HEK293 (cell line): ENCODE measurements at regions of chr19 and their contacts with region 1.

Region 1: DNA sequence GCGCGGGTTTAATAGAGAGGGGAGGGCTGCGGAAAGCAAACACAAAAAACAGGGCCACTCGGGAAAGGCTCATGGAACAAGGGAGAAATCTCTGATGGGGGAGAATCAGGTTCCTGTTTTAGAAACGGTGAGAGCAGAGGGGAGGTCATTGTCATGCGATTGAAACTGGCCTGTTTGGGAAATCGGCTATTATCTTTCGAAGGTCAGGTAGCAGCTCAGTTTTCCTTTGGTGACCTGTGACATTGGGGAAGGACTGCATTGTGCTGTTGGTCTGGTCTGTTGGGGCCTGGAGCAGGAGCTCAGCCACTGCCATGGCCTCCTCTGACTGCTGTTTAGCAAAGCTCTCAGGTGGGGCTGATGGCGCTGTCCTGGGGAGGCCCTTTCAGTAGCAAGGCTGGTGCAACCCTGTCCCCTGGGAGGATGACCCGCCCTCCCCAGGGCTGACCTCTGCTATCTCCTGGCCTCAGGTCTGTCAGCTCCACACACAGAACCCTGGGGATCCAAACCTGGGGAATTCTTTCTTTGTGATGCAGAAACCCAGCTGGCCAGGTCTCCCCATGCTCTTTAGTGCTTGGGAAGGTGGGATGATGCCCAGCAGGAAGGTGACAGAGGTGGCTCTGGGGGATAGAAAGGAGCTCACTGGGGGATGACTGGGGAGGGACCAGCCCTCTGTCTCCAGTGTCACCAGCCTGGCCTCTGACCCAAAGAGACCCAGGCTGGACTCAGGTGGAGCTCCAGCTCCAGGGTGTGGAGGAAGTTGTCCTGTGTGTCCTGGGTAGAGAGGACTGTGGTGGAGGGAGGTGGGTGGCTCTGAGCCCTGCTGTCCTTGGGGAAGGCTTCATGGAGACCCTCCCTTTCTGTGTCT is 21.2 kb upstream of the CD177 start:
- H3K4me3 ChIP-seq: no peak overlapping the region
- H3K27ac ChIP-seq: no peak overlapping the region
- H3K4me1 ChIP-seq: no peaks in the 10 kb centered on the region
- CTCF ChIP-seq: no peak

Region 2: GRCh38 chr19:43316592-43317319 is 15.5 kb before region 1 on chr19:
- CTCF ChIA-PET with region 1: interaction called, 68 read pairs
- POLR2A ChIA-PET with region 1: no interaction called
- H3K4me3 ChIP-seq: no peak overlapping the region
- H3K27ac ChIP-seq: no peak overlapping the region
- H3K4me1 ChIP-seq: peaks cover 3% of the 10 kb centered on the region; the same call in 1 of the 2 replicates
- CTCF ChIP-seq: peak; percentile 99

Region 3: GRCh38 chr19:43351998-43352746 is 19.9 kb after region 1 on chr19:
- CTCF ChIA-PET with region 1: interaction called, 12 read pairs
- POLR2A ChIA-PET with region 1: no interaction called
- H3K4me3 ChIP-seq: no peak overlapping the region
- H3K27ac ChIP-seq: no peak overlapping the region
- H3K4me1 ChIP-seq: peaks cover 3% of the 10 kb centered on the region; the same call in 1 of the 2 replicates
- CTCF ChIP-seq: no peak